ENCODE measurements at regions of chr11 and their contacts with region 1.

Region 1: DNA sequence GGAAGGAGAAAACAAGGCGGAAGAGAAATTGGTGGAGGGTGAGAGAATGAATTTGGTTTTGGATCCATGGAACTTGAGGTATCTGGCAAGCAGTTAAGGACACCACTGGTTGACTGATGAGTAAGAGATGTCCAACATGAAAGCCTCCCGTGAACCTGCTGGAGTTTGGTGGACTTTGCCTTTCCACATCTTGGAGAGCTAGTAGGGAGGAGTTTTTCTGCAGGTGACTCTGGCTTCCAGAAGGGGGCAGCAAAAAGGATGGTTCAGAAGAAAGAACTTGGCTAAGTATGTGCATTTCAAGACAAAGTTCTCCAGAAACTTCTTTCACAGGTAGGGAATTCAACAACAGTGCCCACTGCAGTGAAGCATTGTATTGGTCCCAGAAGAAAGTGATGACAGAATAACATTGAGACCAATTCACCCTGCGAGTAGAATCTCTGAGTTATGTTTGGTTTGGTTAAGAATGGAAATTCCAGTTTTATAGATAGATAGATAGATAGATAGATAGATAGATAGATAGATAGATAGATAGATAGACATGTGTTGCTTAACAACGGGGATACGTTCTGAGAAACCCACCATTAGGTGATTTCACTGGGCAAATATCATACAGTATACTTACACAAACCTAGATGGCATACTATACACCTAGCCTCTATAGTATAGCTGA is 28.5 kb downstream of the DCDC1 start:
- DNase-seq: peak in 4 of 14 experiments; percentile 18 to 50 (median 40)
- ATAC-seq: no peak
- H3K4me3 ChIP-seq: no peak overlapping the region
- H3K4me3 Mint-ChIP-seq: no peak overlapping the region
- H3K27ac ChIP-seq: no peak overlapping the region
- H3K27ac Mint-ChIP-seq: no peak overlapping the region
- H3K4me1 ChIP-seq: no peaks in the 10 kb centered on the region
- H3K4me1 Mint-ChIP-seq: no peaks in the 10 kb centered on the region
- H3K27me3 ChIP-seq: peaks cover 0 to 2% of the 10 kb centered on the region in 2 experiments
- H3K27me3 Mint-ChIP-seq: peaks cover 47% of the 10 kb centered on the region
- CTCF ChIP-seq: peak; percentile 31

Region 2: DNA sequence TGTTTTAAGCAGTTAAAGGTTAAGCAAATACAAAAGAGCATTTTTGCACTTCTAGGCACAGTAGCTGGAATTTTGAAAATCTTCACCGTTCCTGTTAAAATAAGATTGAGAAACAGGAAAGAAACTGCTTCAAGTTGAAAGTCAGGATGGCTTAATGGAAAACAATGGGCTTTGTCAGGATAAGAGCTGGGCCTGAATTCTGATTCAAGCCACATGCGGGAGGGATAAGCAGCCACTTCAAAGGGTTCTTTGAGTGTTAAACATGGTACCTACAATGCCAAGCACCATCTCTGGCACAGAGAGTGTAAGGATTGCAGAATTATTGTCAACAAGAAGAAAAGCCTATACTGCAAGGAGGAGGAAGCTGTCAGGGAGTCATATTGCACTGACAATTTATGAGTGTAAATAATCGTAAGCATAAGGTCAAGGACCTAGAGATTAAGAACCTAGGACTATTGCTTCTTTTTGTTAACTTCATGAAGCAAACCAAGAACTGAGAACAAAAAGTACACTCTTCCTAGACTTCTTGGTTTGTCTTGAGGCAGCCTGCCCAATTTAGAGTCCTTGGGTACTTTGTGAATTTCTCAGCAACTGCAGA is 787.4 kb before region 1 on chr11:
- CTCF ChIA-PET with region 1: no interaction called
- POLR2A ChIA-PET with region 1: no interaction called
- intact Hi-C with region 1: no loop called
- DNase-seq: no peak
- ATAC-seq: no peak
- H3K4me3 ChIP-seq: no peak overlapping the region
- H3K4me3 Mint-ChIP-seq: no peak overlapping the region
- H3K27ac ChIP-seq: no peak overlapping the region
- H3K27ac Mint-ChIP-seq: no peak overlapping the region
- H3K4me1 ChIP-seq: no peaks in the 10 kb centered on the region
- H3K4me1 Mint-ChIP-seq: no peaks in the 10 kb centered on the region
- H3K27me3 ChIP-seq: no peaks in the 10 kb centered on the region
- H3K27me3 Mint-ChIP-seq: no peaks in the 10 kb centered on the region
- CTCF ChIP-seq: no peak

Region 3: DNA sequence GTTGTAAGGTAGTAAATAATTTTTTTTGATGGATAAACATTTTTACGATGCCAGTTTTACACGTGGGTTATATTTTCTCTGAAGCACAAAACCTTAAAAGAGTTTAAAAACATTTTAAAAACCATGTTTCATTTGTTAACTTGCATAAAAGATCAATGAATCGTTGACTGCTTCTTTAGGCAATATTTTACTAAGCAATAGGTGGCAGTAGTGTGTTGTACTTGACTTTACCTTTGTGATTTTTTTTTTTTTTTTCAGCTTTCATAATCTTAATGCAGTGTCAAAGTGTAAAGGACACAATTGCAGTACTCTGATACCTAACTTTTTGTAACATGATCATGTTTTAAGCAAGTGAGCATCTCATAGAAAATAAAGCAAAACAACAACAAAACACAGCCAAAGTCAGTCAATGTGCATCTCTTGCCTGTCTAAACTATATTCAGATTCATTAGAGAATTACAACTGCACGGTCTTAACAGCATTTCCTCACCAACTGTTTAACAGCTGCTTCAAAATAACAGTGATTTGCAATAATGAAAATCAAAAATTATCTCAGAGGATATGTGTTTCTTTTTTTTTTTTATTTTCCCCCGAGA is 56.3 kb after region 1 on chr11:
- CTCF ChIA-PET with region 1: no interaction called
- POLR2A ChIA-PET with region 1: no interaction called
- intact Hi-C with region 1: loop called in 1 of 2 experiments (anchors 5 kb)
- DNase-seq: peak in 3 of 14 experiments; percentile 33 to 45 (median 38)
- ATAC-seq: no peak
- H3K4me3 ChIP-seq: no peak overlapping the region
- H3K4me3 Mint-ChIP-seq: no peak overlapping the region
- H3K27ac ChIP-seq: no peak overlapping the region
- H3K27ac Mint-ChIP-seq: no peak overlapping the region
- H3K4me1 ChIP-seq: no peaks in the 10 kb centered on the region
- H3K4me1 Mint-ChIP-seq: no peaks in the 10 kb centered on the region
- H3K27me3 ChIP-seq: no peaks in the 10 kb centered on the region
- H3K27me3 Mint-ChIP-seq: no peaks in the 10 kb centered on the region
- CTCF ChIP-seq: peak; percentile 60

Region 4: GRCh38 chr11:31437742-31438435 is 96.9 kb after region 1 on chr11:
- CTCF ChIA-PET with region 1: no interaction called
- POLR2A ChIA-PET with region 1: no interaction called
- intact Hi-C with region 1: no loop called
- DNase-seq: no peak
- ATAC-seq: no peak
- H3K4me3 ChIP-seq: no peak overlapping the region
- H3K4me3 Mint-ChIP-seq: no peak overlapping the region
- H3K27ac ChIP-seq: no peak overlapping the region
- H3K27ac Mint-ChIP-seq: no peak overlapping the region
- H3K4me1 ChIP-seq: no peaks in the 10 kb centered on the region
- H3K4me1 Mint-ChIP-seq: peaks cover 4% of the 10 kb centered on the region
- H3K27me3 ChIP-seq: no peaks in the 10 kb centered on the region
- H3K27me3 Mint-ChIP-seq: no peaks in the 10 kb centered on the region
- CTCF ChIP-seq: no peak

Region 5: DNA sequence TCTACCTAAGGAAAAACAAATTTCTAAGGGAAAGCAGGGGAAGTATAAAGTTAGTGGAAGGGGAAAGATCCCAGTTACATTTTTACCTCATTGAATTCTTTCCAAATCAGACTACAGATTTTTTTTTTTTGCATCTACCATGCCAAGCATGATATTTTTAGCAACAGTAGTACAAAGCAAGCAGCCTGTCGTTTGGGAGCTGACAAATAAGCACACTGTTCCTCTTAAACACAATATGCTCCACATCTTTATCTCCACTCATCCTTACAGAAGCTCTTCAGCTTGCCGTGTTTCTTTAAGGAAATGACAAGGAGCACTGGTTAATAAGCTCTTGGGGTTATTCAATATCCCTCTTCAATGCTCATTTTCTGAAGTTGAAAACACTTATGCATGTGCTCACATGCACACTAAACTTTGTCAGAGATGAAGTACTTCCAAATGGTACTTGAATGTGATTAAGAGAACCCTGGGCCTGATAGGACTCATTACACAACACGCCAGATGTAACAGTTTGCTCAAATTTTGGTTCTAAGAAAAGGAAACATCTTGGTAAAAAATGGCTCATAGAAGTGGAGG is 416.3 kb after region 1 on chr11:
- CTCF ChIA-PET with region 1: no interaction called
- POLR2A ChIA-PET with region 1: no interaction called
- intact Hi-C with region 1: no loop called
- DNase-seq: no peak
- ATAC-seq: no peak
- H3K4me3 ChIP-seq: no peak overlapping the region
- H3K4me3 Mint-ChIP-seq: no peak overlapping the region
- H3K27ac ChIP-seq: no peak overlapping the region
- H3K27ac Mint-ChIP-seq: no peak overlapping the region
- H3K4me1 ChIP-seq: no peaks in the 10 kb centered on the region
- H3K4me1 Mint-ChIP-seq: no peaks in the 10 kb centered on the region
- H3K27me3 ChIP-seq: no peaks in the 10 kb centered on the region
- H3K27me3 Mint-ChIP-seq: no peaks in the 10 kb centered on the region
- CTCF ChIP-seq: no peak

Measured in CD4-positive, alpha-beta T cell (primary cell).